ENCODE measurements at regions of chr1 and their contacts with region 1.

Region 1: GRCh38 chr1:23657659-23658275 is 33.8 kb upstream of the RPL11 start:
- DNase-seq: peak; percentile 89
- ATAC-seq: peak; percentile 97
- H3K4me3 Mint-ChIP-seq: no peak overlapping the region
- H3K27ac Mint-ChIP-seq: no peak overlapping the region
- H3K4me1 Mint-ChIP-seq: peaks cover 3% of the 10 kb centered on the region
- H3K27me3 Mint-ChIP-seq: no peaks in the 10 kb centered on the region
- CTCF ChIP-seq: peak; percentile 95

Region 2: DNA sequence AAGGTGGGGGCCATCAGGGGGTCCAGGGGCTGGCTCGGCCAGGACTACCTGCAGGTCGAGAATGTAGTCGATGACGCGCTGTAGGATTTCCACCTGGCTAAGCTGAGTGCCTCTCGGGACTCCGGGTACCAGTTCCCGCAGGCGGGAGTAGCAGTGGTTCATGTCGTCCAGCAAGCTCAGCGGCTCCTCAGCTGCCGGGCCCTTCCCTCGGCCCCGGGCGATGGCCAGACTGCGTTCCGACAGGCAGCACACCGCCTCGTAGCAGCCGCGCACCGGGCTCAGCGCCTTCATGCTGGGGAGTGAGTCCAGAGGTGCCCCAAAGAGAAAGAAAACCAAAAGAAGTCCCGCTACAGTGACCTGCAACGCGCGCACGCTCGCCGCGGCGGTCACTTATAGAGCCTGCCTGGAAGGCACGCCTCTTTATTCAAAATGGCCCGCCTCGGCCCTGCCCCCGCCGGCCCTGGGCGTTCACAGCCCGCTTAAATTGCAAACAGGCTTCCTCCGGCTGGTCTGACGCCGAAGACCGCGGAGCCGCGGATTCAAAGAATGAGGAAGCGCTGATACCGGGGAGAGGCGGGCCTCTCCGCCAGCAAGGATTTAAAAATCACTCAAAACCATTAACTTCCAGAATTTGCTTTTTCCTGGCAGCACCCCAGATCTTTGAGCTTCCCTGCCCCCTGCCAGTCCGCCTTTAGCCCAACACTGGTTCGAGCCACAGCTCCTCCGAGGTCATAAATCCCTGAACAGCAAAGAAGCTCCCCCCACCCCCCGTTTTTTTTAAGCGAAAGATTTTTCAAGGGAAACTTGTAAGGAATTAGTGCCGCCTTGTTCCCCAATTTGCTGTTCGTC is 98.4 kb before region 1 on chr1 and contains the start of gene ID3:
- CTCF ChIA-PET with region 1: interaction called, 21 read pairs
- POLR2A ChIA-PET with region 1: no interaction called
- DNase-seq: peak; percentile 96
- ATAC-seq: peak; percentile 47
- H3K4me3 Mint-ChIP-seq: peak within 1 kb of the TSS; percentile 94
- H3K27ac Mint-ChIP-seq: peak within 1 kb of the TSS; percentile 98
- H3K4me1 Mint-ChIP-seq: peaks cover 74% of the 10 kb centered on the region
- H3K27me3 Mint-ChIP-seq: no peaks in the 10 kb centered on the region
- CTCF ChIP-seq: no peak
- total RNA-seq, gene ID3: 168 to 278 TPM (median 273 TPM) in 3 replicates

Region 3: DNA sequence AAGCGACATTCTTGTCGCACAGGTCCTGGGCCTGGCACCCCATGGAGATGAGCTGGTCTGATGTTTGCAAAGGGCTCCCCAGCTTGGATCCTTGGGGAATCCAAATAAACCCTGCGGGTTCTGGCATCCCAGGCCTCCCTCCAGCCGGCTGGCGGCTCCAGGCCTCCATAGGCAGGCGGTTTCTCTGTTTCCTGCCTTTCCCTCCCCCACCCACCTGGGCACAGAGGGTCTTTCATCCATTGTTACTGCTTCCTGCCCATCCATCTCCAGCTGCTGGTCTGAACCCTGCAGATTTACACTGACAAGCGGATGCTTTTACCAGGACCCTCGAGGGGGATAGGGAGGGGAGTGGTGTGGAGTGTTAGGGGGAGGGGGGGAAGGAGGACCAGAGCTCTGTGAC is 59.3 kb before region 1 on chr1:
- CTCF ChIA-PET with region 1: interaction called, 12 read pairs
- POLR2A ChIA-PET with region 1: no interaction called
- DNase-seq: peak; percentile 92
- ATAC-seq: peak; percentile 90
- H3K4me3 Mint-ChIP-seq: no peak overlapping the region
- H3K27ac Mint-ChIP-seq: peak overlapping the region; percentile 92; the same call in 1 of the 2 replicates
- H3K4me1 Mint-ChIP-seq: peaks cover 85% of the 10 kb centered on the region
- H3K27me3 Mint-ChIP-seq: no peaks in the 10 kb centered on the region; the same call in 1 of the 2 replicates
- CTCF ChIP-seq: no peak

Region 4: GRCh38 chr1:23643736-23644554 is 13.8 kb before region 1 on chr1:
- CTCF ChIA-PET with region 1: interaction called, 59 read pairs
- POLR2A ChIA-PET with region 1: no interaction called
- DNase-seq: no peak
- ATAC-seq: peak; percentile 52
- H3K4me3 Mint-ChIP-seq: no peak overlapping the region
- H3K27ac Mint-ChIP-seq: no peak overlapping the region
- H3K4me1 Mint-ChIP-seq: peaks cover 5% of the 10 kb centered on the region
- H3K27me3 Mint-ChIP-seq: peaks cover 6% of the 10 kb centered on the region; the same call in 1 of the 2 replicates
- CTCF ChIP-seq: no peak

Region 5: GRCh38 chr1:23673086-23673813 is 15.5 kb after region 1 on chr1:
- CTCF ChIA-PET with region 1: interaction called, 10 read pairs
- POLR2A ChIA-PET with region 1: no interaction called
- DNase-seq: peak; percentile 73
- ATAC-seq: peak; percentile 90
- H3K4me3 Mint-ChIP-seq: no peak overlapping the region
- H3K27ac Mint-ChIP-seq: no peak overlapping the region
- H3K4me1 Mint-ChIP-seq: no peaks in the 10 kb centered on the region
- H3K27me3 Mint-ChIP-seq: peaks cover 19% of the 10 kb centered on the region; the same call in 1 of the 2 replicates
- CTCF ChIP-seq: no peak

Region 6: DNA sequence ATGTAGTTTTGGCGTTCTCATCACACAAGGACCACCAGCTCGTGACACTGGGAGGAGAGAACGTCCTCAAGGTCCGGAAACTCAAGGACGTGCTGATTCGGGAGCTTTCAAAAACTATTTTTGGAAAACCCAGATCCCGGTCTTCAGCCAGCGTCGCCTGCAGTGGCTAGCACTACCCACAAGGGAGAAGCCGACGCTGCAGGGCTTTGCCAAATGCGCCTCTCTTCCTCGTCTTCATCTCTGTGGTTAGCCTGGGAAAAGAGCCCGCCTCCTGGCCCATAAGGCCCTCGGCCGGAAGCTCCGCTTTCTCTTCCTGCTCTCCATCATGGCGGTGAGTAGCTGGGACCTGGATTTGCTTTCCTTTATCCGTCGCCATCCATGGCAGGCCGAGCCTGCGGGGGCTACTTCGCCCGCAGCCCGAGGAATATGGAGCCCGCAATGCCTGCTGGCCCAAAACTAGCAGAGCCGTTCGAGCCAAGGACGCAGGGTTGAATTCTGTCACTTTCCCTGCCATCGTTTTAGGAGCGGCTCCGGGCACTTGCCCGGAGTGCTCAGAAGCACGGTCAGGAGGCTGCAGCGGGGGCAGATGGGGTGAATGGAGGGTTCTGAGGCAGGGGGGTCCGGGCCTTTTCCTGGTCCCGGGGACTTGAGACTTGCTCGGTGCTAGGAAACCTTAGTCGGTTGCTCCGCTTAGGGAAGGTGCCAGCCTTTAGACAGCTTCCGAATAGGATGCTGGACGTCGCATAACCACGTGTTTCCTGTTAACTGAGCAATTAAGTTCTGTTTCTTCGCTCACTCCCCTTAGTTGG is 33.9 kb after region 1 on chr1 and contains the start of gene RPL11:
- CTCF ChIA-PET with region 1: interaction called, 14 read pairs
- POLR2A ChIA-PET with region 1: interaction called, 5 read pairs
- DNase-seq: peak; percentile 89
- ATAC-seq: peak; percentile 98
- H3K4me3 Mint-ChIP-seq: peak within 1 kb of the TSS; percentile 98
- H3K27ac Mint-ChIP-seq: peak within 1 kb of the TSS; percentile 93
- H3K4me1 Mint-ChIP-seq: peaks cover 44% of the 10 kb centered on the region
- H3K27me3 Mint-ChIP-seq: no peaks in the 10 kb centered on the region; the same call in 1 of the 2 replicates
- CTCF ChIP-seq: no peak
- total RNA-seq, gene RPL11: 1,406 to 1,500 TPM (median 1,442 TPM) in 3 replicates

Measured in WTC11 (cell line).